ENCODE measurements at regions of chr16 and their contacts with region 1.

Region 1: GRCh38 chr16:28879841-28880588 is 1.7 kb downstream of the ATP2A1 start:
- DNase-seq: peak; percentile 81
- H3K4me3 Mint-ChIP-seq: peak overlapping the region; percentile 89
- H3K27ac Mint-ChIP-seq: peak overlapping the region; percentile 52
- H3K4me1 Mint-ChIP-seq: peaks cover 15% of the 10 kb centered on the region
- H3K27me3 Mint-ChIP-seq: peaks cover 2% of the 10 kb centered on the region

Region 2: GRCh38 chr16:28924732-28925385 is 44.8 kb after region 1 on chr16 and contains the start of gene RABEP2:
- intact Hi-C with region 1: no loop called
- DNase-seq: peak; percentile 93
- H3K4me3 Mint-ChIP-seq: peak within 1 kb of the TSS; percentile 95
- H3K27ac Mint-ChIP-seq: peak within 1 kb of the TSS; percentile 99
- H3K4me1 Mint-ChIP-seq: peaks cover 11% of the 10 kb centered on the region
- H3K27me3 Mint-ChIP-seq: no peaks in the 10 kb centered on the region
- total RNA-seq, gene RABEP2: 20.6 and 24.2 TPM in 2 replicates

Region 3: GRCh38 chr16:28943281-28943680 is 63.3 kb after region 1 on chr16:
- intact Hi-C with region 1: loop called (anchors 1 kb)
- DNase-seq: no peak
- H3K4me3 Mint-ChIP-seq: no peak overlapping the region
- H3K27ac Mint-ChIP-seq: no peak overlapping the region
- H3K4me1 Mint-ChIP-seq: peaks cover 13% of the 10 kb centered on the region
- H3K27me3 Mint-ChIP-seq: no peaks in the 10 kb centered on the region